Aorta (tissue), 5 donors: ENCODE measurements at regions of chr5 and their contacts with region 1.

Region 1: GRCh38 chr5:54719384-54720283 is 202.1 kb downstream of the SNX18 start:
- DNase-seq: peak in 1 of 2 donors; percentile 56
- ATAC-seq: peak; percentile 61
- H3K4me3 ChIP-seq: no peak overlapping the region
- H3K27ac ChIP-seq: peak overlapping the region; percentile 52 to 82
- H3K4me1 ChIP-seq: peaks cover 0 to 11% of the 10 kb centered on the region in 2 donors
- H3K27me3 ChIP-seq: no peaks in the 10 kb centered on the region

Region 2: GRCh38 chr5:54171645-54172384 is 547.8 kb before region 1 on chr5:
- intact Hi-C with region 1: no loop called
- DNase-seq: no peak
- ATAC-seq: no peak
- H3K4me3 ChIP-seq: no peak overlapping the region
- H3K27ac ChIP-seq: no peak overlapping the region
- H3K4me1 ChIP-seq: peaks cover 0 to under 1% of the 10 kb centered on the region in 2 donors
- H3K27me3 ChIP-seq: no peaks in the 10 kb centered on the region

Region 3: GRCh38 chr5:54678737-54679136 is 40.9 kb before region 1 on chr5:
- intact Hi-C with region 1: no loop called
- DNase-seq: no peak
- ATAC-seq: no peak
- H3K4me3 ChIP-seq: no peak overlapping the region
- H3K27ac ChIP-seq: peak overlapping the region; percentile 1 to 93
- H3K4me1 ChIP-seq: peaks cover 1 to 4% of the 10 kb centered on the region in 2 donors
- H3K27me3 ChIP-seq: no peaks in the 10 kb centered on the region

Region 4: DNA sequence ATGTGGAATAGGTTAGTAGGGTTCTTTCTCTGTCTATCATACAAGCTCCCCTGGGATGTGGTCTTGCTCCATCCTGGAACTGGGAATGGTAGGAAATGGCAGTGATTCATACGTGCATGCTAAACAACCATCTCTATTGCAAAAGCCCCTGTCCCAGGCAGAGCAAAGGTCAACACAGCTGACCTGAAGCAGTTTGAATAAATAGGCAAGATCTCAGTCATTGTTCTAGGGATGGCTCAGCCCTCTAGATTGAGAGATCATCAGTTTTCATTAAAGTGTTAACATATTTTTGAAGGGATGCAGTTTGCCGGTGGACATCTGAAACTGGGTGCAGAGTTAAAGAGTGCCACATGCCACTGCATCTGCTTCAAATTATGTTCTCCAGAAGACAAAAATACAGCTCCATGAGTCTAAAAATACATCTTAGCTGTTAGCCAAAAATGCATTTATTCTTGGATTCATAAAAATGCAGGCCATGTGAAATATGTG is 41.6 kb after region 1 on chr5:
- intact Hi-C with region 1: loop called (anchors 5 kb)
- DNase-seq: no peak
- ATAC-seq: peak; percentile 36
- H3K4me3 ChIP-seq: no peak overlapping the region
- H3K27ac ChIP-seq: peak overlapping the region; percentile 67 to 76
- H3K4me1 ChIP-seq: peaks cover 10 to 11% of the 10 kb centered on the region in 2 donors
- H3K27me3 ChIP-seq: no peaks in the 10 kb centered on the region

Region 5: DNA sequence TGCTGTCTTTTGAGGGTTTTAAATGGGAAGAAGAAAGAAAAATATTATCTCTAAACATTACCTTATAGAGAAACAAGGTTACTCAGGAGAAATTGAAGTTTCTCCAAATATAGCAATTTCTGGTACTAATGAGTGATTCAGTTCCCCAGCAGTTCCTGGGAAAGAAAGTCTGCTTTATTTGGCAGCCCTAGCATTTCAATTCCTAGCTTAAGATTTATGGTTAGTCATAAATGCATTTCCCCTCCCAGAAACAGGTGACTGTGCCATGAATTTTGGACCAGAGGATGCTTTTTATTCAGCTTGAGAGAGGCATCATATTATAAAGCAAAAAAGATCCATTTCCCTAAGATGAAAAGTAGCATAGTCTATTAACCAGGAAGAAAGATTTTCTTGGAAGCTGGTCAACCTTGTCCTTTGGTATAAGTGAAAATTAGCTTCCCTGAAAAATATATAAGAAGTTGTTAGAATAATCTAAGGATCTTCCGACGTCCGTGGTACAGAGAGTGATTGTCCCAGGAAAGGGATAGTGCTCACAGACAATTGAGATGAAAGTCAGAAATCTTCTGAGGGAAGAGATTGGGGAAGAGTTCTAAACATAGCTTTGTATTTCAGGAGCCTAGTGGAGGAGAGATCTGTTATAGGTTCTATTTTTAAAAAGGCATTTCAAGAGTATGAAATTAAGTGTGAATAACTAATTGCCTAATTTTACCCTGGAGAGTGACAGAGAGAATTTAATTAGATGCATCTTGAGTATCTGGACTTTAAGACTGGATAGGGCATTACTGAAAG is 100.9 kb after region 1 on chr5:
- intact Hi-C with region 1: loop called in 1 of 2 experiments (anchors 5 kb)
- DNase-seq: no peak
- ATAC-seq: no peak
- H3K4me3 ChIP-seq: no peak overlapping the region
- H3K27ac ChIP-seq: peak overlapping the region; percentile 75 to 76
- H3K4me1 ChIP-seq: peaks cover 2 to 4% of the 10 kb centered on the region in 2 donors
- H3K27me3 ChIP-seq: no peaks in the 10 kb centered on the region

Region 6: DNA sequence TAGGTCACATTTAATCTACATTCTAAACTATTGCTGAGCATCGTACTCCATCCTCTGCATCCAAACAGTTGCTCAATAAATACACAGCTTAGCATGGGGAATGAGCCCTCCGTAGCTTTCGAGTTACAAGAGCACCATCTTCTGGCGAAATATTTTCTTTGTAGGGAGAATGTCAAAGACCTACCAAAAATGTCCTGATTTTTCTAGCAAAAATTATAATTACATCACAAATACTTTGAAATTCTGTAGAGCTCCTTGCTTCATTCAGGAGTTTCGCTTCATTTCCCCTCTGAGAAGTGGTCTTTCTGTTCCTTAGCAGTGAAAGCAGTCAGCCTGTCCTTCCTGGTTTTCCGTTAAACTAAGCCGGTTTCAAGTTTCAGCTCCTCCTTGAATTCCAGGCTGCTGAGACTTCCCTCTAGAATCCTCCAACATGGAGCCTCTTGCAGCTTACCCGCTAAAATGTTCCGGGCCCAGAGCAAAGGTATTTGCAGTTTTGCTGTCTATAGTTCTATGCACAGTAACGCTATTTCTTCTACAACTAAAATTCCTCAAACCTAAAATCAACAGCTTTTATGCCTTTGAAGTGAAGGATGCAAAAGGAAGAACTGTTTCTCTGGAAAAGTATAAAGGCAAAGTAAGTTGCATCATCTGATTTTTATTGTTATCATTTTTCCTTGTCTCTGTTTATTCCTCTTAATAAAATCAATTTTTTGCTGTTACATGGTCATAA is 440.3 kb after region 1 on chr5 and contains the start of gene GPX8:
- intact Hi-C with region 1: loop called in 1 of 2 experiments (anchors 10 kb)
- DNase-seq: no peak
- ATAC-seq: peak; percentile 88
- H3K4me3 ChIP-seq: peak within 1 kb of the TSS; percentile 92 to 97
- H3K27ac ChIP-seq: peak within 1 kb of the TSS in 1 of 2 donors; percentile 40
- H3K4me1 ChIP-seq: no peaks in the 10 kb centered on the region
- H3K27me3 ChIP-seq: no peaks in the 10 kb centered on the region
- total RNA-seq, gene GPX8: 29.8 to 49.8 TPM